AG04449 (cell line): ENCODE measurements at regions of chr1 and their contacts with region 1.

Region 1: DNA sequence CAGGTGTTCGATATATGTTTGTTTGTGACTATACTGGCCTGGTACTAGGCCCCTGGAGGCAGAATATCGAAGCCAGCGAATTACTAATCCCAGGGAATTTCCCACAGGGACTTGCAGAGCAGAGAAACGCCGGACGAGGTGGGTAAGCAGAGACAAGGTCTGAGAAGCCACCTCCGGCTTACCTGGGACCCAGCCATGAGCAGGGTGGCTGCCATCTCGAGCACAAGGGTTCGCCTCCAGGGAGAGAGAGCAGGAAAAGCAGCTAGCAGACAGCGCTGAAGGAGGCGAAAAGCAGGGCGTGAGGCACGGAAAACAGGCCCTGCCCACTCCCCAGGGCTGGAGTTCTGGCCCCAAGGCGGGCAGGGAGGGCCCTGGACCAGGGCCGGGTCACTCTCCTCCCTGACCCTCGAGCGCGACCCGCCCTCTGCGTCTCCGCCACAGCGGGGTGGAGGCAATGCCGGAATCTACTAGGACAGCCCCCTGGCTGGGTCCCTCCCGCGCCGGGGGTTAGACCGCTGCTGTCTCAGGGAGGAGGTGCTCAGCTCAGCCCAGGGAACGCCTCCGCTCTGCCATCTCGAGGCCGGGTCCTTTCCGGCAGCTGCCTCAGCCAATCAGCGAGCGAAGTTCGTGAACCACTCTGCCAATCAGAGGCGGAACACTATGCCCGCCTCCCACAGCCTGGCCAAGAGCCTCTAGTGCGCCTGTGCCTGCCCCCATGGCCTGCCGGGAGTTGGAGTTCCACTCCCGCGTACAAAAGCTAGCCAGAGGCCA is 1.7 kb downstream of the ZNF436 start:
- DNase-seq: peak; percentile 89
- H3K4me3 ChIP-seq: peak overlapping the region; percentile 90
- CTCF ChIP-seq: no peak

Region 2: GRCh38 chr1:23050201-23050600 is 317.8 kb before region 1 on chr1:
- CTCF ChIA-PET with region 1: no interaction called
- POLR2A ChIA-PET with region 1: no interaction called
- DNase-seq: no peak
- H3K4me3 ChIP-seq: no peak overlapping the region
- CTCF ChIP-seq: no peak

Region 3: GRCh38 chr1:23354245-23354644 is 13.7 kb before region 1 on chr1:
- CTCF ChIA-PET with region 1: interaction called, 12 read pairs
- POLR2A ChIA-PET with region 1: no interaction called
- DNase-seq: no peak
- H3K4me3 ChIP-seq: no peak overlapping the region
- CTCF ChIP-seq: no peak

Region 4: DNA sequence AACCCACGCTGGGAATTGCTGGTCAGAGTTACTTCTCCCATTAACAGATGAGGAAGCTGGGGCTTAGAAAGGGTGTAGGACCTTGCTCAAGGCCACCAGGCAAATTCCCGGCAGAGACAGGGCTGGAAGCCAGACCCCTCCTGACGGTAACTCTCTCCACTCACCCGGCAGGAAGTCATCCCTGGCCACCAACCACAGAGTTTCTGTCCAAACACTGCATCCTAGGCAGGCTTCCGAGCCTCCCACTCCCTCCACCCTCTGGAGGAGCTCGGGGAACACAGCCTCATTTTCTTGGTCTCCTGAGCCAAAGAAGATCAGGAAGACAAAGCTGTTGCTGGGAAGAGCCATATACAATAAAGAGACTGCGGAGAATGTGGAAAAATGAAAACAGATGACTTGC is 26.7 kb after region 1 on chr1:
- CTCF ChIA-PET with region 1: interaction called, 4 read pairs
- POLR2A ChIA-PET with region 1: interaction called, 12 read pairs
- DNase-seq: peak; percentile 42
- H3K4me3 ChIP-seq: no peak overlapping the region
- CTCF ChIP-seq: peak; percentile 4